Pancreas (tissue), 10 donors: ENCODE measurements at regions of chr2 and their contacts with region 1.

Region 1: DNA sequence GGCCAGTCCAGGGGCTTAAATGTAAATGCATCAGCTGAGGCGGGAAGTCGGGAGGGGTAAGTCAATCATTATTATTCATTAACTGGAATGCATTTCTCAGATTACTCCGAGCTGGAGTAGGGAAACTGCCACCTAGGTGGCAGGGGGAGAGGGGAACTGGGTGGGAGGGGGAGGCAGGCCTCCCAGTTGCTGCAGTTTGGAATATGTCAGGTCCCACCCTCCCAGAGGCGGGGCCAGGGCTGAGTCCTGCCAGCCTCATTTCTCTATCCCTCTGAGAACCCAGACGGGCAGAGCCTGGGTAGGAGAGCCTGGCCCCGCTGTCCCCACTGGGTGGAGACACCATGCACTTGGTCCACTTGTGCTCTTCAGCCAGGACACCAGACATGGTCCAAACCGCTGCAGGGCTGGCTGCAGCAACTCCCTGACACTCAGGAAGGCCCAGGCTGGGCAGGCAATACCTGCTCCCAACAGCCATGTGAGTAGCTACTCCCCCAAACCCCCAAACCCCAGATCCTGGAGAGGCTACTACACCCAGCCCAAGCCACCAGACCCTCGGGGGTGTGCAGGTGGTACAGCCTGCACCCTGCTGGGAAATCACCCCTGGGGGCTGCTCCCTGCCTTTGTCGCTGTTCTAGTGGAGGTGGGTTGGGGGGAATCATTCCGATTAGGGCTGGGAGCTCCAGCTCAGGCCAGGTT is at the start of gene GPBAR1:
- DNase-seq: peak in 4 of 6 donors; percentile 42 to 67 (median 61)
- ATAC-seq: peak; percentile 41 to 59 (median 53)
- H3K4me3 ChIP-seq: no peak within 1 kb of the TSS
- H3K27ac ChIP-seq: peak within 1 kb of the TSS in 3 of 4 donors; percentile 22 to 50 (median 27)
- H3K4me1 ChIP-seq: peaks cover 0 to 10% (median 0%) of the 10 kb centered on the region in 3 donors
- H3K27me3 ChIP-seq: no peaks in the 10 kb centered on the region
- CTCF ChIP-seq: no peak
- total RNA-seq, gene GPBAR1: 0.12 to 1.8 (median 0.76) TPM

Region 2: DNA sequence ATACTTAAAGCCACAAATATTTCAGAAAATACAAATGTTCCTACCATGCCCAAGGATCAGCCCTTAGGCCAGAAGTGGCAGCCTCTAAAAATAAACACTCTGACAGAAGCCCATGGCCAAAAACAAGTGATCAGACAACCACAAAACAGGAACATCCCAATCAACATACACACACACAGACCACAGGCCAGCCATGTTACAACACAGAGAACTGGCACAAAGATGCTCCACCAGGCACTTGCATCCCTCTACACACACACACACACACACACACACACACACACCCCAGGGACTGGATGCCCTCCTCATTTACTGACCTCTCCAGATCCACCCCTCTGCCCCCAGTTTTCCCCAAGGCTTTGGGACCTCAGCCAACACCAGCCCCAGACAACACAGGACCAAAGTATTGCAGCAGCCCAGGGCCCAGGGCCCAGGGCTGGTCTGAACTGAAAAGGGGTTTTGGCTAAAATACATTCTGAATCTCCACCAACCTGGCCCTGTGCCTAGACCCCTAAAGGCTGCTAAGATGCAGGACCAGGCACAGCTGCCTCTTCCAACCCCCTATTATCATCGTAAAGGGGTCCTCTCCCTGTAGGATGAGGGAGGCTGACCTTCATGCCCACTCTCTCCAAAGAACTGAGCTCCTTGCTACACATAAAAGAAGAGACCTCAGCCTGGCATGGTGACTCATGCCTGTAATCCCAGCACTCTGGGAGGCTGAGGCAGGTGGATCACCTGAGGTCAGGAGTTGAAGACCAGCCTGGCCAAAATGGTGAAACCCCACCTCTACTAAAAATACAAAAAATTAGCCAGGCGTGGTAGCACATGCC is 409.5 kb before region 1 on chr2:
- intact Hi-C with region 1: no loop called
- DNase-seq: peak in 1 of 6 donors; percentile 31
- ATAC-seq: peak in 2 of 4 donors; percentile 29 to 39
- H3K4me3 ChIP-seq: no peak overlapping the region
- H3K27ac ChIP-seq: peak overlapping the region in 2 of 4 donors; percentile 23 to 30
- H3K4me1 ChIP-seq: peaks cover 0 to 3% (median 0%) of the 10 kb centered on the region in 3 donors
- H3K27me3 ChIP-seq: no peaks in the 10 kb centered on the region
- CTCF ChIP-seq: no peak

Region 3: DNA sequence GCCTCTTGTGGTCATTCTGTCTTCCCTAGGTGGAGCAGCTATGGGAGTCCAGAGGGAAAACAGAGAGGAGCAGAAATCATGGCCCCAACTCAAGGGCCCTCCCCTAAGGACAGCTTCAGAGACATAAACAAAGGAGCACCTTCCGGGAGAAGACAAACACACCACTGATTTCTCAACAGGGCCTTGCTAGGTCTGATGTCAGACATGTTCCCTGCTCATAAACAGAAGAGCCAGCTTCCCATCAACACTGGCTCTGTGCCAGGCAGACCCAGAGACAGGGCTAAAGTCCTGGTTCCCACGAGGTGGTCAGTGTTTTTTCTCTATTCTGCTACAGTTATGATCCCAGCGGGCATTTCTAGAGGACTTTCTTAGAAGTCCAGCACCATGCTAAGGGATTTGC is 115.8 kb before region 1 on chr2:
- intact Hi-C with region 1: no loop called
- DNase-seq: no peak
- ATAC-seq: no peak
- H3K4me3 ChIP-seq: no peak overlapping the region
- H3K27ac ChIP-seq: no peak overlapping the region
- H3K4me1 ChIP-seq: no peaks in the 10 kb centered on the region
- H3K27me3 ChIP-seq: no peaks in the 10 kb centered on the region
- CTCF ChIP-seq: no peak

Region 4: GRCh38 chr2:218180467-218181114 is 80.3 kb before region 1 on chr2:
- intact Hi-C with region 1: loop called in 1 of 3 experiments (anchors 5 kb)
- DNase-seq: no peak
- ATAC-seq: no peak
- H3K4me3 ChIP-seq: no peak overlapping the region
- H3K27ac ChIP-seq: no peak overlapping the region
- H3K4me1 ChIP-seq: no peaks in the 10 kb centered on the region
- H3K27me3 ChIP-seq: no peaks in the 10 kb centered on the region
- CTCF ChIP-seq: no peak

Region 5: DNA sequence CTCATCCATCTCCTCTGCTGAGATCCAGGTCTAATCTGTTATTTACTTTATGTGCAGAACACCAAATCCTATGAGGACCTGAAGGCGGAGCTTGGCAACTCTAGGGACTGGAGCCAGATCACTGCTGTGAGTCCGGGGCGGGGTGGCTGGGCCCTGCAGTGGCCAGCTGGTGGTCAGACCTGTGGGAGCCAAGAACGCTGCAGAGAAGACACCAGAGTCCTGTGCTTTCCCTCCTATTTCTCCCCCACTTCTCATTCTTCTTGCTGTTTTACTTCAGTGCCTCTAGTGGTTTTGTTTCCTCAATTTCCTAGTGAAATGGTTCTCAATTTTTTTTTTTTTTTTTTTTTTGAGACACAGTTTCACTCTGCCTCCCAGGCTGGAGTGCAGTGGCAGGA is 177.7 kb after region 1 on chr2:
- intact Hi-C with region 1: no loop called
- DNase-seq: no peak
- ATAC-seq: no peak
- H3K4me3 ChIP-seq: no peak overlapping the region
- H3K27ac ChIP-seq: no peak overlapping the region
- H3K4me1 ChIP-seq: no peaks in the 10 kb centered on the region
- H3K27me3 ChIP-seq: no peaks in the 10 kb centered on the region
- CTCF ChIP-seq: no peak

Region 6: DNA sequence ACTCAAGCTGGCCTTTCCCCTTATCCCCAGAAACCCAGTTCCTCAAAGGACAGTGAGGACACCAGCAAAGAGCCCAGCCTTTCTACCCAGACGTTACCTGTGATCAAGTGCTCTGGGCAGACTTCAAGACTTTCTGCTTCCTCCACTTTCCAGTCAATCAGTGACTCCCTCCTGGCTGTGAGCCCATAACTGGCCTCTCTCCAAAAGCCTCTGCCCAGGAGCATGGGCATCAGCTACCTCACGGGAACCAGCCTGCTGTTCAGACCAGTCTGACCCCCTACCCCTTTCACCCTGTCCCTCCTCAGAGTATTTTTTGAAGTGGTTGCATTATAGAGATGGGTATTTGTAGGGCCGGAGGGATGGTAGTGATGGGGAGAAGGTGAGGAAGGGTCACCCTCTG is 493.3 kb after region 1 on chr2:
- intact Hi-C with region 1: no loop called
- DNase-seq: peak in 2 of 6 donors; percentile 58 to 62
- ATAC-seq: peak in 3 of 4 donors; percentile 31 to 34 (median 32)
- H3K4me3 ChIP-seq: no peak overlapping the region
- H3K27ac ChIP-seq: no peak overlapping the region
- H3K4me1 ChIP-seq: no peaks in the 10 kb centered on the region
- H3K27me3 ChIP-seq: no peaks in the 10 kb centered on the region
- CTCF ChIP-seq: no peak